Dorsolateral prefrontal cortex (tissue), 120 donors: ENCODE measurements at regions of chr20 and their contacts with region 1.

Region 1: GRCh38 chr20:5950271-5951031 is at the starts of genes MCM8 and TRMT6:
- DNase-seq: peak; percentile 90 to 96 (median 95)
- H3K4me3 ChIP-seq: peak within 1 kb of the TSS; percentile 65 to 100 (median 92)
- H3K27ac ChIP-seq: peak within 1 kb of the TSS in 40 of 59 donors; percentile 3 to 85 (median 58)
- H3K27me3 ChIP-seq: no peaks in the 10 kb centered on the region
- CTCF ChIP-seq: peak in 38 of 56 donors; percentile 3 to 59 (median 26)
- total RNA-seq, gene MCM8: 2.2 to 8.2 (median 5.0) TPM
- total RNA-seq, gene TRMT6: 5.5 to 20.4 (median 12.4) TPM

Region 2: DNA sequence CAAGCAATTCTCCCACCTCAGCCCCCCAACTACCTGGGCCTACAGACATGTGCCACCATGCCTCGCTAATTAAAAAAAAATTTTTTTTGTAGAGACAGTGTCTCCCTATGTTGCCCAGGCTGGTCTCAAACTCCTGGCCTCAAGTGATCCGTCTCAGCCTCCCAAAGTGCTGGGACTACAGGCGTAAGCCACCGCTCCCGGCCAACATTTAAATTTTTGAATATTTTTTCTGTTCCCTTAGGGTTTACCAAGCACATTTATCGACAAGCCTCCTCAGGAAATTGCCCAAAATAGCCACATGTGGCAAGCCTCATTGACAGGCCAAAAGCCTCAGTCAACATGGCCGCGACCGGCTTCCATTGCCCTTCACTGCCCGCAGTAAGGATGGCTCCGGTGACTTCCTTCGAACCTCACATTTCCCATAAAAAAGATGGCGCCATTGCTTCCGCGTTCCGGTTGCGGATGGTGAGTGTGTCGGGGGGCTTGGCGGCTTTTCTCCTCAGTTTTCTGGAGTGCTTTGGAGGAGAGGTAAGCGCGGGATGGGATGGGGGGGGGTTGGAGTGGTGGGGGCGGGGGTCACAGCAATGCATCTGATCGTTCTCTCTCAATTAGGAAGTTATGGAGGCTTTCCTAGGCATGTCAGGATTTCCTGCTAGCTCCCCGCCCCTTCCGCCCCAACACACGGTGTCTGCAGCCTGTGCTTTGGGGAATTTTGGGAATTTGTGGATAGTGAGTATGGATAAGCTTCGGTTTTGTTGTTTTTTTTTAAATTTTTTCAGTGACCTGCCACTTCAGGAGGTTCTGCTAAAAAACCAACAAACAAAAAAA is 200.3 kb before region 1 on chr20 and contains the start of gene SHLD1:
- intact Hi-C with region 1: loop called in 1 of 2 experiments (anchors 2 kb)
- DNase-seq: peak; percentile 68 to 90 (median 84)
- H3K4me3 ChIP-seq: peak within 1 kb of the TSS; percentile 37 to 94 (median 71)
- H3K27ac ChIP-seq: peak within 1 kb of the TSS; percentile 59 to 96 (median 89)
- H3K27me3 ChIP-seq: peaks cover 0 to 21% (median 0%) of the 10 kb centered on the region in 45 donors
- CTCF ChIP-seq: peak in 12 of 56 donors; percentile 1 to 32 (median 16)
- total RNA-seq, gene SHLD1: 3.7 to 13.9 (median 7.7) TPM